Dorsolateral prefrontal cortex (tissue), 120 donors: ENCODE measurements at regions of chr1 and their contacts with region 1.

Region 1: DNA sequence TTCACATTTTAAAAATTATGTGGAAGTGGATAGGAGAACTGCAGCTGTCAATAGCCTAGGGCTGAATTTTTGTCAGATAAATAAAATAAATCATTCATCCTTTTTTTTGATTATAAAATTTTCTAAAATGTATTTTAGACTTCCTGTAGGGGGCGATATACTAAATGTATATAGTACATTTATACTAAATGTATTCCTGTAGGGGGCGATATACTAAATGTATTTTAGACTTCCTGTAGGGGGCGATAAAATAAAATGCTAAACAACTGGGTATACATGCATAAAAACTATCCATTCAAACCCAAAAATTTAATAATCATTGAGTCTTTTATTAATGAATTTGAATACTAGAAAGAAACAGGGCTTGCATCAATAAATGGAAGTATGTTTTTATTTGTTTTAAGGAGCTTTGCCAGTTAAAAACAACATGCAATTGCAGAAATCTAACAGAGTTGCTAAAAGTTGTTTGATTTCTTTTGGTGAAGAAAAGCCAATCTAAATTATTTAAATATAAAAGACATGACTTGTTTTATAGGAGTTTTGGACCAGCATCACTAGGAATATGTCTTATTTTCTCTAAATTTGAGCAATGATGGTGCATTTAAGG is 31.4 kb downstream of the CLCA1 start:
- DNase-seq: no peak
- H3K4me3 ChIP-seq: no peak overlapping the region
- H3K27ac ChIP-seq: peak overlapping the region in 20 of 59 donors; percentile 5 to 77 (median 58)
- H3K27me3 ChIP-seq: no peaks in the 10 kb centered on the region
- CTCF ChIP-seq: peak; percentile 73 to 95 (median 84)

Region 2: GRCh38 chr1:86395771-86396497 is 104.2 kb before region 1 on chr1 and contains the start of gene ODF2L:
- intact Hi-C with region 1: loop called in 1 of 2 experiments (anchors 5 kb)
- DNase-seq: peak; percentile 82 to 96 (median 94)
- H3K4me3 ChIP-seq: peak within 1 kb of the TSS; percentile 52 to 96 (median 90)
- H3K27ac ChIP-seq: peak within 1 kb of the TSS in 58 of 59 donors; percentile 0 to 91 (median 80)
- H3K27me3 ChIP-seq: no peaks in the 10 kb centered on the region
- CTCF ChIP-seq: peak in 20 of 56 donors; percentile 6 to 46 (median 15)
- total RNA-seq, gene ODF2L: 44.3 to 89.6 (median 67.4) TPM

Region 3: GRCh38 chr1:86429835-86430234 is 70.3 kb before region 1 on chr1:
- intact Hi-C with region 1: loop called in 1 of 2 experiments (anchors 10 kb)
- DNase-seq: no peak
- H3K4me3 ChIP-seq: no peak overlapping the region
- H3K27ac ChIP-seq: peak overlapping the region in 14 of 59 donors; percentile 8 to 77 (median 42)
- H3K27me3 ChIP-seq: no peaks in the 10 kb centered on the region
- CTCF ChIP-seq: peak in 1 of 56 donors; percentile 11

Region 4: DNA sequence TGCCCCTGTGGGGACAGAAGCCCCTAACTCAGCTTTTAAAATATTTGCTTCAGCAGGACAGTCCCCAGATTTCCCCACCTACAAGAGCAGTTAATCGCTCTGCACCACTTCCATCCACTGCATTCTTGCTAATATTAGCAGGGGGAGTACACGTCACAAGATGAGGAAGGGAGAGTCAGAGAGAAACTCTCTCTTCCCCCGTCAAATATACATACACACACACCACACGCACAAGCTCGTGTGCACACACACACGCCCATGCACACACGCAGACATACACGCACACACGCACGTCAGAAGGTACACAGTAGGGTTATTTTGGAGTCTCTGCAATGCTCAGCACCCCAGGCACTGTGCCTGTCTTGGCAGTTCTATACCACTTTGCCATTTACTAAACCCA is 29.2 kb before region 1 on chr1:
- intact Hi-C with region 1: loop called in 1 of 2 experiments (anchors 2 kb)
- DNase-seq: no peak
- H3K4me3 ChIP-seq: no peak overlapping the region
- H3K27ac ChIP-seq: no peak overlapping the region
- H3K27me3 ChIP-seq: no peaks in the 10 kb centered on the region
- CTCF ChIP-seq: no peak

Region 5: DNA sequence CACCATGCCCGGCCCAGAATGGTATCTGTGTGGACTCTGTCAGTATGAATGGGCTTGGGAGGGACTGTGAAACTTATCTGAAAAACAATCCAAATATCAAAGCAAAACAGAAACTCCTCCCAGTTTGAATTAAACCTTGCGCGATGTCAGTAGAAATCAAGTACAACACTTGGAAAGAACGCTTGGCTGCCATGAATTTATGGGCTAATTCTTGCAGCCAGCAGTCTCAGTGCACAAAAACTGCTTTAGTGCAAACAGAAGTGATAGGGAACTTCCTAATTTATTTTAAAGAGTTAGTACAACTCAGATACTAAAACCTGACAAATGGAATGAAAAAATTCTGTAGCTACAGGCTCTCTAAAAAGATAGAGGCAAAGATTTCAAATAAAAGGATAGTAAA is 22.8 kb before region 1 on chr1:
- intact Hi-C with region 1: loop called in 1 of 2 experiments (anchors 1 kb)
- DNase-seq: no peak
- H3K4me3 ChIP-seq: no peak overlapping the region
- H3K27ac ChIP-seq: no peak overlapping the region
- H3K27me3 ChIP-seq: no peaks in the 10 kb centered on the region
- CTCF ChIP-seq: no peak